Heart left ventricle (tissue), 16 donors: ENCODE measurements at regions of chr20 and their contacts with region 1.

Region 1: GRCh38 chr20:21490095-21490494 is 23.8 kb downstream of the NKX2-2 start:
- DNase-seq: no peak
- ATAC-seq: no peak
- H3K4me3 ChIP-seq: no peak overlapping the region
- H3K27ac ChIP-seq: no peak overlapping the region
- H3K4me1 ChIP-seq: no peaks in the 10 kb centered on the region
- H3K27me3 ChIP-seq: peaks cover 0 to 45% (median 5%) of the 10 kb centered on the region in 9 donors
- CTCF ChIP-seq: no peak
- POLR2A ChIP-seq: no peak

Region 2: GRCh38 chr20:21089395-21089794 is 400.7 kb before region 1 on chr20:
- intact Hi-C with region 1: loop called in 1 of 10 experiments (anchors 10 kb)
- DNase-seq: no peak
- ATAC-seq: no peak
- H3K4me3 ChIP-seq: no peak overlapping the region
- H3K27ac ChIP-seq: no peak overlapping the region
- H3K4me1 ChIP-seq: no peaks in the 10 kb centered on the region
- H3K27me3 ChIP-seq: peaks cover 3 to 78% (median 50%) of the 10 kb centered on the region in 9 donors
- CTCF ChIP-seq: no peak
- POLR2A ChIP-seq: no peak

Region 3: GRCh38 chr20:21894579-21894978 is 404.5 kb after region 1 on chr20:
- intact Hi-C with region 1: no loop called
- DNase-seq: no peak
- ATAC-seq: no peak
- H3K4me3 ChIP-seq: no peak overlapping the region
- H3K27ac ChIP-seq: no peak overlapping the region
- H3K4me1 ChIP-seq: no peaks in the 10 kb centered on the region
- H3K27me3 ChIP-seq: no peaks in the 10 kb centered on the region
- CTCF ChIP-seq: no peak
- POLR2A ChIP-seq: no peak